ENCODE measurements at regions of chr1 and their contacts with region 1.

Region 1: DNA sequence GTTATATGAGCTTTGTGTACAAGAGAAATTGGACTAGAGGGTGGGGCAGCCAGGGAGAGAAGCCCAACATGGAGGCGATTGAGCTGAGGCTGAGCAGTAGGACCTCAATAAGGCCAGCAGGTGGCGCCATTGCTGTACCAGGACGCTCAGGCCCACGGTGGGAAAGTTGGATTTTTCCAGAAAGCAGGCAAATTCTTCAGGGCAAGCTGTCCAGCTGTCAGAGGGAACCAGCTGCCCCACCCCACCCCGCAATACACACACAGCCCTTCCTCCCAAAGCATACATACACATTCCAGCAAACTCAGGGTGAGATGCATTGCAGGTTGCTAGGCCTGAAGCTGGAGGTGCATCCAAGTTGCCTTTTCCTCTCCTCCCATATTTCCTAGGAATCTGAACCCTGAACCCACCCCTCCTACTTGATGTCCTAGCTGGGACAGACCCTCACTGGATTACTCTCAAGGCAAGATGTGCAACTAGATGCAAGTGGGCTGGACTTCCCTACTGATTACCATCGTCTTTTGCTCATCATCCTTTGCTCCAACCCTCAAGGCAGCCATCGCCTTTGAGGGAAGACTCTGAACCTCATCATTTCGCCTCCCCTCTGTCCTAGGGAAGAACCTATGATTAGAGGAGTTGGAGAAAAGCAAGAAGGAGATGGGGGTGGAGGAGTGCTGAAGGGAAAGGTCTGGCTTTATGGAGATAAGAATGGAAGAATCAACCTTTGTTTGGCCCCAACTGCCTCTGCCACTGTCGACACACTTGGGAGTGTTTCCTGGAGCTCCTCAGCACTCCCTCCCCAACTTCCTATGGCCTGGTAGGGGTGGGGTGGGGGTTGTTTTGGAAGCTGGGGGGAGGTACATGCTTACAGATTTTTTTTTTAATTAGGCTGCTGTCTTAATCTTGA is 25.5 kb downstream of the CD34 start:
- DNase-seq: peak; percentile 88 to 92 (median 90)
- ATAC-seq: peak; percentile 96
- H3K4me3 ChIP-seq: no peak overlapping the region
- H3K27ac ChIP-seq: no peak overlapping the region
- H3K4me1 ChIP-seq: peaks cover 21 to 35% of the 10 kb centered on the region in 2 experiments; a peak in 4 of 5 replicates
- H3K27me3 ChIP-seq: no peaks in the 10 kb centered on the region
- CTCF ChIP-seq: peak; percentile 94 to 99 (median 97)
- EP300 ChIP-seq: peak; percentile 35; the same call in 1 of the 2 replicates
- POLR2A ChIP-seq: no peak
- RAD21 ChIP-seq: peak; percentile 97 to 98

Region 2: DNA sequence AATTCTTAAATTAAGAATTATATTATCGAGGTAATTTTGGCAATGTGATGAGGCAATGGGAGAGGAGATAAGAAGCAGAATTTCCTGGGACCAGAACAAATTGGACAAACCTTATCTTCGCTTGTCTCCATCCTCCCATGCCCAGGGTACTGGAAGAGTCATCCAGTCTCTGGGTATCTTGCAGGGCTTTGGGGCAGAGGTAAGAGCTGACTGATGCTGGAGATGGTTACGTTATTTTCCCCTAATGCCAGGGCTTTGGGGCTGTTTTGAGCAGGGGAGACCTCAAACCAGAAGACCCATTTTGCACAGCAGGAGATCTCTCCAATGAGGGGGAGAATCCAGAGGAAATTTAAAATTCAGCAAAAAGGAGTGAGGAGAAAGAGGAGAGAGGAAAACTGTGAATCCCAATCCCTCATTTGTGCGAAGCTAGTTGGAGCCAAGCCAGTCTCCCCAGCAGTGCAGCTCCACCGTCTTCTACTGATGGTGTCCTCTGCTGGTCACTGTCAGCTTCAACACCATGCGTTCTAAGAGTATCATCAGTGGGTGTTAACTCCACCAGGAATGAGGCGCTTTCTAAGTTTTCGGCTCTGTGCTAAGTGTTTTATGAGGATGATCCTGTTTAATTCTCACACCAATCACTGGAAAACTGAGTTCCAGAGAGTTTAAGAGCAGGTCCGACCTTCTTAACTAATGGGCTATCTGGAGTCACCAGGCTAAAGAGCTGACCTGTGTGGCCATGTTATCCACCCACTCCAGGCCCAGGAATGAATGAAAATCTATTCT is 112.3 kb after region 1 on chr1:
- CTCF ChIA-PET with region 1: interaction called, 16 read pairs
- POLR2A ChIA-PET with region 1: interaction called, 7 read pairs
- in situ Hi-C with region 1: no loop called
- intact Hi-C with region 1: loop called (anchors 2 kb)
- DNase-seq: peak; percentile 75 to 84 (median 77)
- ATAC-seq: peak; percentile 97
- H3K4me3 ChIP-seq: no peak overlapping the region
- H3K27ac ChIP-seq: no peak overlapping the region
- H3K4me1 ChIP-seq: no peaks in the 10 kb centered on the region; a peak in 1 of 5 replicates
- H3K27me3 ChIP-seq: peaks cover 10 to 32% of the 10 kb centered on the region in 2 experiments; a peak in 4 of 5 replicates
- CTCF ChIP-seq: peak; percentile 82 to 95 (median 89)
- EP300 ChIP-seq: no peak
- POLR2A ChIP-seq: no peak
- RAD21 ChIP-seq: peak; percentile 64 to 80